ENCODE measurements at regions of chr2 and their contacts with region 1.

Region 1: DNA sequence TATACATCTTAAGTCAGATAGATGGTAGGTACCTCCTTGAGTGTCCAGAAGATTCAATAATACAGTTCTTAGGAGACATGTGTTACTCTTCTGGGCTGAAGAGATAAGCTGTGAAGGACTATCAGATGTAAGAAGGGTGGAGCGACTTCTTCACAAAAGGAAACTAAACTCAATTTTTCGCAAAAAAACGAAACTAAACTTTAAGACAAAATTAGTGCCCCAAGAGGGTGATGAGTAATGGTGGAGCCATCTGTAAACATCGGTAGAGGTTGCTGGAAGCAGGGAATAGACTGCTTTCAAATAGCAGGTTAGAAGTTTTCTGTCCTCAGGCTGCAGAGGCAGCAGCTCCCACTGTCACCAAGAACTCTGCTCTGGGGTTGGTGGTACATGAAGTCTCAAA is 111.6 kb upstream of the TACR1 start:
- DNase-seq: peak; percentile 57
- ATAC-seq: peak; percentile 85
- H3K4me3 ChIP-seq: peak overlapping the region; percentile 22; the same call in 1 of the 2 replicates
- H3K27ac ChIP-seq: 0 out of 2 replicates have a peak overlapping the region, but pooled peaks have one; percentile 21
- H3K4me1 ChIP-seq: peaks cover 5% of the 10 kb centered on the region
- H3K27me3 ChIP-seq: no peaks in the 10 kb centered on the region
- CTCF ChIP-seq: no peak
- POLR2A ChIP-seq: no peak
- RAD21 ChIP-seq: no peak

Region 2: GRCh38 chr2:74922592-74923227 is 388.2 kb before region 1 on chr2:
- CTCF ChIA-PET with region 1: no interaction called
- POLR2A ChIA-PET with region 1: no interaction called
- dilution Hi-C with region 1: no loop called
- in situ Hi-C with region 1: no loop called
- intact Hi-C with region 1: no loop called
- DNase-seq: peak; percentile 35
- ATAC-seq: no peak
- H3K4me3 ChIP-seq: no peak overlapping the region
- H3K27ac ChIP-seq: no peak overlapping the region
- H3K4me1 ChIP-seq: peaks cover 4% of the 10 kb centered on the region; the same call in 1 of the 2 replicates
- H3K27me3 ChIP-seq: no peaks in the 10 kb centered on the region
- CTCF ChIP-seq: no peak
- POLR2A ChIP-seq: no peak
- RAD21 ChIP-seq: no peak

Region 3: GRCh38 chr2:75186821-75187220 is 124.1 kb before region 1 on chr2:
- CTCF ChIA-PET with region 1: no interaction called
- POLR2A ChIA-PET with region 1: no interaction called
- dilution Hi-C with region 1: no loop called
- in situ Hi-C with region 1: no loop called
- intact Hi-C with region 1: no loop called
- DNase-seq: no peak
- ATAC-seq: no peak
- H3K4me3 ChIP-seq: no peak overlapping the region
- H3K27ac ChIP-seq: no peak overlapping the region
- H3K4me1 ChIP-seq: no peaks in the 10 kb centered on the region
- H3K27me3 ChIP-seq: no peaks in the 10 kb centered on the region; the same call in none of the 2 replicates
- CTCF ChIP-seq: no peak
- POLR2A ChIP-seq: no peak
- RAD21 ChIP-seq: no peak

Region 4: DNA sequence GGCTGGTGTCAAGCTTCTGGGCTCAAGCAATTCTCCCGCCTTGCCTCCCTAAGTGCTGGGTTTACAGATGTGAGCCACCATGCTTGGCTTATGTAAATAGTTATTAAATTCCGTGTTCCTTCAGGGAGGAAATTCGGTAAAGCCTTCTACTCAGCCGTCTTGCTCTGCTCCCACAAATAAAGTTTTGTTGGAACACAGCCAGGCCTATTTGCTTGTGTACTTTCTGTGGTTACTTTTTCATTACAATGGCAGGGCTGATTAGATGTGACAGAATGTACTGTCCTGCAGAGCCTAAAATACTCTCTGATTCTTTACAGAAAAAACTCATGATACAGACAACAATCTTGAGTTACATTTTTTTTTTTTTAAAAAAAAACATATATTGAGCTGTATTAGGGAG is 42.8 kb before region 1 on chr2:
- CTCF ChIA-PET with region 1: no interaction called
- POLR2A ChIA-PET with region 1: interaction called, 16 read pairs
- dilution Hi-C with region 1: no loop called
- in situ Hi-C with region 1: no loop called
- intact Hi-C with region 1: no loop called
- DNase-seq: no peak
- ATAC-seq: no peak
- H3K4me3 ChIP-seq: no peak overlapping the region
- H3K27ac ChIP-seq: no peak overlapping the region
- H3K4me1 ChIP-seq: no peaks in the 10 kb centered on the region
- H3K27me3 ChIP-seq: no peaks in the 10 kb centered on the region
- CTCF ChIP-seq: no peak
- POLR2A ChIP-seq: no peak
- RAD21 ChIP-seq: no peak